ENCODE measurements at regions of chr7 and their contacts with region 1.

Region 1: DNA sequence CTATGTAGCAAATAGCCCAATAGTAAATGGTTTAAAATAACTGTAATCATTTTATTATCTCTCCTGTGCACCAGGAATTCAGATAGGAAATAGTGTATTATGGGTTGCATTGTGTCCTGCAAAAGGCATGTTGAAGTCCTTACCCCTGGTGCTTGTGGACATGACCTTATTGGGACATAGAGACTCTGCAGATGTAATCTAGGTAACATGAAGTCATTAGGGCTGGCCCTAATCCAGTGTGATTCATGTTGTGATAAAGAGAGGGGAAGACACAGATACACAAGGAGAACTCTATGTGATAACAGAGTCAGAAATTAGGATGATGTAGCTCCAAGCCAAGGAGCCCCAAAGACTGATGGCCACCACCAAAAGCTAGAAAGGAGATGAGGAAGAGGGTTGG is 462.8 kb downstream of the GALNT17 start:
- DNase-seq: no peak
- ATAC-seq: no peak
- H3K4me3 ChIP-seq: no peak overlapping the region
- H3K27ac ChIP-seq: no peak overlapping the region
- H3K4me1 ChIP-seq: no peaks in the 10 kb centered on the region
- H3K27me3 ChIP-seq: no peaks in the 10 kb centered on the region
- CTCF ChIP-seq: no peak
- POLR2A ChIP-seq: no peak
- RAD21 ChIP-seq: no peak

Region 2: DNA sequence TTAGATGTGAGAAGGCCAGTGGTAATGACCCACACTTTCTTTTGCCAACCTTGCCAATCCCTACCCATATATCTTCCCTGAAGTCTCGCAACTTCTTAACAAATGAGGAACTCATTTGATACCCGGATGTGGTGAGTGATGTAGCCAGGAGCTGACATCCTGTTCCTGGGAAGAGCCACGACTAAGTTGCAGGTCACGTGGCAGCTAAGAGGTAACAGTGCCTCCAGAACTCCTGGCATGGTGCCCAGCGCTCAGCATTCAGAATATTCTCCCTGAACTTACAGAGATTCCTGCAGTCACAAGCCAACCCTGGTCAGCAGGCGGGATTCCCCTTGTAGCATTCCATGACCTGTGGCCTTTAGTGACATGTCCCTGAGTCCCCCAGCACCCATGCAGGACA is 180.3 kb before region 1 on chr7:
- CTCF ChIA-PET with region 1: no interaction called
- POLR2A ChIA-PET with region 1: no interaction called
- dilution Hi-C with region 1: no loop called
- in situ Hi-C with region 1: no loop called
- intact Hi-C with region 1: no loop called
- DNase-seq: no peak
- ATAC-seq: no peak
- H3K4me3 ChIP-seq: no peak overlapping the region
- H3K27ac ChIP-seq: no peak overlapping the region
- H3K4me1 ChIP-seq: no peaks in the 10 kb centered on the region
- H3K27me3 ChIP-seq: no peaks in the 10 kb centered on the region
- CTCF ChIP-seq: no peak
- POLR2A ChIP-seq: no peak
- RAD21 ChIP-seq: no peak

Region 3: GRCh38 chr7:71480791-71481190 is 114.0 kb before region 1 on chr7:
- CTCF ChIA-PET with region 1: interaction called, 15 read pairs
- POLR2A ChIA-PET with region 1: no interaction called
- dilution Hi-C with region 1: no loop called
- in situ Hi-C with region 1: no loop called
- intact Hi-C with region 1: no loop called
- DNase-seq: no peak
- ATAC-seq: no peak
- H3K4me3 ChIP-seq: no peak overlapping the region
- H3K27ac ChIP-seq: no peak overlapping the region
- H3K4me1 ChIP-seq: no peaks in the 10 kb centered on the region
- H3K27me3 ChIP-seq: no peaks in the 10 kb centered on the region
- CTCF ChIP-seq: no peak
- POLR2A ChIP-seq: no peak
- RAD21 ChIP-seq: no peak